B cell (primary cell): ENCODE measurements at regions of chr2 and their contacts with region 1.

Region 1: DNA sequence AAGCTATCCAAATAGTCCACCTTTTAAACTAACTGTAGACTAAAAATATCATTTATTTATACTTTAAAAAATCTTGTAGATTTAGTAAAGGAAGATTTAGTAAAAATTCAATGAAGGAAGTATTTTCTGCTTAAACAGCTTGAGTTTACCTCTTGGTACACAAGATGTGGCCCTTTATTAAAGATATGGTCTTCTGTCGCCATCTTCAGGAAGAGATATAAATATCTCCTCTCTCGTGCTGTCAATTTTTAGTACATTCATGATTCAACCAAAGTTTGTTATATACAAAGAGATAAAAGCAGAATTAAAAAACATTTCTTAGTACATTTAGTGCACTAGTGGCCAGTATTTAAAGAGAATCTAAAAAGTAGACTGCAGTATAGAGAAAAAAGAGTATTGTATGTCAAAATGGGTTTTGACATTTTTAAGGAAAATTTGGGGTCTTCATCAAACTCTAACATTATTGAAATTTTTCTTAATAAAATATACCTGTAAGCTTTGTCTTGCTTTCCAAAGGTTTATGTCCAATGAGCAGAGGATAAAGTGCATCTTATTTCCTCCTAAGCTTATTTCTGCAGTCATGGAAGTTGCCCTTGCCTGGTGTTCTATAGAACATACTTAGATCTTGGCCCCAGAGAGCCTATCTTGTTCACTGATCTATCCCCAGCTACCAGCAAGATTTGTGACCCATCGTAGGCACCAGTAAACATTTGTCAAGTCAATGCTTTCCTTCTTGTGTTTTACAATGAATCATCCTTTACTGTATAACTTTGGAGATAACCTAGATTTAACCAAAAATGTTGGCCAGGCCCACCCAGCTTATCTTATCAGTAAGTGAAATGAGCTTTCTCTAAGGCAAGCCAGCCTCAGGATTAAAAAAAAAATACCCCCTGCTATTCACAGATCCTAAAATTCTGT is 18.5 kb upstream of the EML6 start:
- DNase-seq: peak; percentile 74
- ATAC-seq: peak; percentile 55
- H3K4me3 ChIP-seq: no peak overlapping the region
- H3K4me3 Mint-ChIP-seq: no peak overlapping the region
- H3K27ac ChIP-seq: no peak overlapping the region
- H3K27ac Mint-ChIP-seq: no peak overlapping the region
- H3K4me1 ChIP-seq: peaks cover 14 to 15% of the 10 kb centered on the region in 2 donors
- H3K4me1 Mint-ChIP-seq: peaks cover 11% of the 10 kb centered on the region
- H3K27me3 ChIP-seq: peaks cover 0 to 16% (median 12%) of the 10 kb centered on the region in 4 experiments
- H3K27me3 Mint-ChIP-seq: peaks cover 11% of the 10 kb centered on the region
- CTCF ChIP-seq: peak; percentile 80

Region 2: GRCh38 chr2:54115284-54116137 is 589.4 kb before region 1 on chr2 and contains the start of gene ACYP2:
- CTCF ChIA-PET with region 1: interaction called, 4 read pairs
- POLR2A ChIA-PET with region 1: interaction called, 4 read pairs
- intact Hi-C with region 1: loop called (anchors 2 kb)
- DNase-seq: peak; percentile 96
- ATAC-seq: peak; percentile 82
- H3K4me3 ChIP-seq: peak within 1 kb of the TSS; percentile 75 to 97 (median 85)
- H3K4me3 Mint-ChIP-seq: peak within 1 kb of the TSS; percentile 98
- H3K27ac ChIP-seq: peak within 1 kb of the TSS; percentile 97 to 99
- H3K27ac Mint-ChIP-seq: peak within 1 kb of the TSS; percentile 100
- H3K4me1 ChIP-seq: peaks cover 7% of the 10 kb centered on the region in 2 donors
- H3K4me1 Mint-ChIP-seq: peaks cover 16% of the 10 kb centered on the region
- H3K27me3 ChIP-seq: no peaks in the 10 kb centered on the region
- H3K27me3 Mint-ChIP-seq: no peaks in the 10 kb centered on the region
- CTCF ChIP-seq: no peak
- total RNA-seq, gene ACYP2: 14.0 and 16.4 TPM in 2 replicates

Region 3: GRCh38 chr2:54579684-54580620 is 125.0 kb before region 1 on chr2:
- CTCF ChIA-PET with region 1: interaction called, 13 read pairs
- POLR2A ChIA-PET with region 1: no interaction called
- intact Hi-C with region 1: no loop called
- DNase-seq: peak; percentile 65
- ATAC-seq: peak; percentile 44
- H3K4me3 ChIP-seq: peak overlapping the region in 1 of 5 experiments; percentile 34
- H3K4me3 Mint-ChIP-seq: peak overlapping the region; percentile 77
- H3K27ac ChIP-seq: peak overlapping the region; percentile 77 to 85
- H3K27ac Mint-ChIP-seq: peak overlapping the region; percentile 93
- H3K4me1 ChIP-seq: peaks cover 89 to 91% of the 10 kb centered on the region in 2 donors
- H3K4me1 Mint-ChIP-seq: peaks cover 93% of the 10 kb centered on the region
- H3K27me3 ChIP-seq: no peaks in the 10 kb centered on the region
- H3K27me3 Mint-ChIP-seq: no peaks in the 10 kb centered on the region
- CTCF ChIP-seq: no peak

Region 4: DNA sequence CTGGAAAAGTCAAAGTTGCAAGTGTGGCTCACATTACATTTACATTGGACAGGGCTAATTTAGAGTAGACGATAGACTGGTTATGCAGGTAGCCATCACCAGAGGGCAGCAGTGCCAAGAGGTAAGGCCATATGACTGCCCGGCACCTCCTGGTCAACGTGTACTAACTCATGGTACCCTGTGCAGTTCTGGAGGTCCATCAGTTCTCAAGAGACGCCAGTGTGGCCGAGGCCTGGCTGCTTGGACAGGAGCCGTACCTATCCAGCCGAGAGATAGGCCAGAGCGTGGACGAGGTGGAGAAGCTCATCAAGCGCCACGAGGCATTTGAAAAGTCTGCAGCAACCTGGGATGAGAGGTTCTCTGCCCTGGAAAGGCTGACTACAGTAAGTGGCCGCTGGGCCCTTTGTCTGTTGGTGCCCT is 47.3 kb before region 1 on chr2:
- CTCF ChIA-PET with region 1: interaction called, 294 read pairs
- POLR2A ChIA-PET with region 1: no interaction called
- intact Hi-C with region 1: loop called (anchors 2 kb)
- DNase-seq: peak; percentile 42
- ATAC-seq: peak; percentile 65
- H3K4me3 ChIP-seq: no peak overlapping the region
- H3K4me3 Mint-ChIP-seq: no peak overlapping the region
- H3K27ac ChIP-seq: no peak overlapping the region
- H3K27ac Mint-ChIP-seq: peak overlapping the region; percentile 53
- H3K4me1 ChIP-seq: no peaks in the 10 kb centered on the region
- H3K4me1 Mint-ChIP-seq: no peaks in the 10 kb centered on the region
- H3K27me3 ChIP-seq: no peaks in the 10 kb centered on the region
- H3K27me3 Mint-ChIP-seq: no peaks in the 10 kb centered on the region
- CTCF ChIP-seq: peak; percentile 67

Region 5: DNA sequence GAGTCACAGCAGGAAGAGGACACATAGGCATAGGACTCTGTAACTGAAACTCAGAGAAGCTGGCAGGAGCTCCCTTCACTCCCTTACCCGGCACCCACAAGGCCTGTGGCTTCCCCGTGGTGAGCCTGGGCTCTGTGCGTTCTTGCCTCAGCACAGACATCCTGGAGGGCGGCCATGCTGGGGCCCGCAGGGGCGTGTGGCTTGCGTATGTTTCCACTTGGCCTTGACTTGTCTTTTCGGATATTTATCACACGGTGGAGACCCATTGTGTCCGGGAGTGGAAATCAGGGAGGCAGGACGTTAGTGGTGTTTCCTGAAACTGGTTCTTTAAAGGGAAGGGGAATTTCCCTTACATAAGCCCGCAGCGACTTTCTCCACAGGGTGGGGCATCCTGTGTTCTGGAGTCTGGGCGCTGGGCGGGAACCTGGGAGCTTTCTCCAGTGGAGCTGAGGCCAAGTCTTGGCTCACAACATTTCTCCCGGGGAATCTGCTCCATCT is 31.4 kb before region 1 on chr2:
- CTCF ChIA-PET with region 1: interaction called, 42 read pairs
- POLR2A ChIA-PET with region 1: no interaction called
- intact Hi-C with region 1: no loop called
- DNase-seq: peak; percentile 44
- ATAC-seq: peak; percentile 62
- H3K4me3 ChIP-seq: peak overlapping the region in 2 of 5 experiments; percentile 8 to 39
- H3K4me3 Mint-ChIP-seq: peak overlapping the region; percentile 79
- H3K27ac ChIP-seq: no peak overlapping the region
- H3K27ac Mint-ChIP-seq: peak overlapping the region; percentile 75
- H3K4me1 ChIP-seq: peaks cover 20 to 23% of the 10 kb centered on the region in 2 donors
- H3K4me1 Mint-ChIP-seq: peaks cover 35% of the 10 kb centered on the region
- H3K27me3 ChIP-seq: no peaks in the 10 kb centered on the region
- H3K27me3 Mint-ChIP-seq: no peaks in the 10 kb centered on the region
- CTCF ChIP-seq: no peak

Region 6: DNA sequence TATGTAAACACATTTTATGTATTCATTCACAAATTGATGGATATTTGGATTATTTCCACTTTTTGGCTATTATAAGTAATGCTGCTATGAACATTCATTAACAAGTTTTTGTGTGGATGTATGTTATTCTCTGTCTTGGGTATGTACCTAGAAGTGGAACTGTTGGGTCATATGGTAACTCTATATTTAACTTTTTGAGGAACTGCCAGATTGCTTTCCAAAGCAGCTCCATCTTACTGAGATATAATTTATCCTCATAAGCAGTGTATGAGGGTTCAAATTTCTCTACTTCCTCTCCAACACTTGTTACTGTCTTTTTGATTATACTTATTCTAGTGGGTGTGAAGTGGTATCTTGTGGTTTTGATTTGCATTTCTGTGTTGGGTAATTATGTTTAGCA is 11.4 kb after region 1 on chr2:
- CTCF ChIA-PET with region 1: interaction called, 12 read pairs
- POLR2A ChIA-PET with region 1: no interaction called
- intact Hi-C with region 1: no loop called
- DNase-seq: no peak
- ATAC-seq: no peak
- H3K4me3 ChIP-seq: no peak overlapping the region
- H3K4me3 Mint-ChIP-seq: no peak overlapping the region
- H3K27ac ChIP-seq: no peak overlapping the region
- H3K27ac Mint-ChIP-seq: no peak overlapping the region
- H3K4me1 ChIP-seq: no peaks in the 10 kb centered on the region
- H3K4me1 Mint-ChIP-seq: peaks cover 5% of the 10 kb centered on the region
- H3K27me3 ChIP-seq: peaks cover 0 to 8% (median 2%) of the 10 kb centered on the region in 4 experiments
- H3K27me3 Mint-ChIP-seq: peaks cover 20% of the 10 kb centered on the region
- CTCF ChIP-seq: no peak

Region 7: DNA sequence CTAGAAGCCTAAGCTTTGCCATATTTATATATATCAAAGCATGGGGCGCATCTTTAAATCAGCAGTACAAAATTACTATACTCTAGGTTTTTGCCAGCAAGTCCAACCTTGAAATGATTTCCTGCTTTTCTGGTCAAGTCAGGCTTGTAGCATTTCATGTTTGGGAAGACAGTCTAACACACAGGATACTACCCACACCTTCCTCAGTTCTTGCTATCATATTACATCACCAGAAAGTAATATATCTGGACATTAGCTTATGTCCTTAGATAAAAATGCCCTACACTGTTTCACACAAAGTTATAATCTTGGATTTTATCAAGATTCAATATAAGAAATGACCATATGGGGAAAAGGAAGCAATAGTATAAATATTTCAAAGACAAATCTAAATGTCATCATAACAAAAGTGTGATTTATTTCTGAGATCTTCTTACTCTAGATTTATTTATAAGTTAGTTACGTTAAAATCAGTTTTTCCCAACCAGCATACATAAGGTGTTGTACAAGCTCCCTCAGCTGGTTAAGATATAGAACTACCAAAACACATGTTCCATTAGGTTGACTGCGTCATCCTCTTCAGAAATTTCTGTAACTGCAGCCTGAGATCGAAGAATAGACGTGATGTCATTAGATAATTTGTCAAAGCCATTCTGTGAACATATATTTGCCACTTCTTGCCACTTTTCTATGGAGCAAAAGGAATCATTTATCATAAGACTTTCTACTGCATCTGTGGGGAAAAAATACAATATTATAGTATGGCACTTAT is 470.5 kb after region 1 on chr2:
- CTCF ChIA-PET with region 1: interaction called, 12 read pairs
- POLR2A ChIA-PET with region 1: no interaction called
- intact Hi-C with region 1: no loop called
- DNase-seq: peak; percentile 68
- ATAC-seq: peak; percentile 88
- H3K4me3 ChIP-seq: peak overlapping the region in 1 of 5 experiments; percentile 34
- H3K4me3 Mint-ChIP-seq: peak overlapping the region; percentile 11
- H3K27ac ChIP-seq: no peak overlapping the region
- H3K27ac Mint-ChIP-seq: no peak overlapping the region
- H3K4me1 ChIP-seq: peaks cover 0 to 4% of the 10 kb centered on the region in 2 donors
- H3K4me1 Mint-ChIP-seq: peaks cover 7% of the 10 kb centered on the region
- H3K27me3 ChIP-seq: no peaks in the 10 kb centered on the region
- H3K27me3 Mint-ChIP-seq: no peaks in the 10 kb centered on the region
- CTCF ChIP-seq: peak; percentile 74